ENCODE measurements at regions of chr3 and their contacts with region 1.

Region 1: GRCh38 chr3:66822186-66823008 is 175.7 kb upstream of the KBTBD8 start:
- DNase-seq: peak; percentile 81
- H3K4me3 Mint-ChIP-seq: no peak overlapping the region
- H3K27ac Mint-ChIP-seq: no peak overlapping the region
- H3K4me1 Mint-ChIP-seq: no peaks in the 10 kb centered on the region
- H3K27me3 Mint-ChIP-seq: peaks cover 14% of the 10 kb centered on the region
- CTCF ChIP-seq: peak; percentile 58

Region 2: DNA sequence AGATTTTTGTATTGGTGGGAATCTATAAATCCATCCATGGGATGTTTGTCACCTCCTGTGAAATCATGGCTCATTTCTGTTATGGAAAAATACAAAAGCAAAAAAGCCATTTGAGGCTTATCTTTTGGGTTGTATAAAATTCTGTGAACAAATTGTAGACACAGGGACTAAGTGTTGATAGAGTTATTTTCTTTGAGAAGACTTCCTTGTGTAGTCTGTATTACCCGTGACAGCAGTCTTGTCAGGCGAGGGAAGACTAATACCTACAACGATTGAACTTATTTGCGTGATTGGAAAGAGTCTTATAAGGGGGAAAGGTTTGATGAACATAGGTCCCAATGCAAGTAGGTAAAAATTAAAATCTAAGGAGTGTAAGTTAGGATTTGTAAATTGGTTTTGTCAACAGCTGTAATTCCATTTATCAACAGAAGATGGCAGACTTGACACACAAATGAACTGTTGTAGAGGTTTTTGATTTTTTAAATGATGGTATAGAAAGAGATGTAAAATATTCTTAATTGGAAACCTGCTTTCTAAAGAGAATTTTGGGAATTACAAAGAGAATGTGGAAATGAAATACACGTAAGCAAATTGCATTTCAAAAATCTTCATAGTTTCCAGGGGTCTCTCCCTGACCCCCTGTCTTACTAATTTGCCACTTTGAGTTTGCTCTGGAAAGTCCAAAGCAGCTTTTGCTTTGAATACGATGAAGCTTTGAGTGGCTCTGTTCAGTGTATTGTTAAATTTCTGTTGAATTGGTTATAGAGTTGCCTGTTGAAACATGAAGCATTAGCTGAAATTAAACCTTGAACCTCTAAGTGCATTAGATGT is 568.4 kb before region 1 on chr3:
- CTCF ChIA-PET with region 1: interaction called, 7 read pairs
- intact Hi-C with region 1: loop called (anchors 1 kb)
- DNase-seq: no peak
- H3K4me3 Mint-ChIP-seq: no peak overlapping the region
- H3K27ac Mint-ChIP-seq: no peak overlapping the region
- H3K4me1 Mint-ChIP-seq: no peaks in the 10 kb centered on the region
- H3K27me3 Mint-ChIP-seq: no peaks in the 10 kb centered on the region
- CTCF ChIP-seq: peak; percentile 50

Region 3: GRCh38 chr3:66442254-66443117 is 379.9 kb before region 1 on chr3:
- CTCF ChIA-PET with region 1: no interaction called
- intact Hi-C with region 1: no loop called
- DNase-seq: peak; percentile 2
- H3K4me3 Mint-ChIP-seq: no peak overlapping the region
- H3K27ac Mint-ChIP-seq: no peak overlapping the region
- H3K4me1 Mint-ChIP-seq: peaks cover 11% of the 10 kb centered on the region
- H3K27me3 Mint-ChIP-seq: no peaks in the 10 kb centered on the region
- CTCF ChIP-seq: no peak

Region 4: GRCh38 chr3:66778777-66779176 is 43.6 kb before region 1 on chr3:
- CTCF ChIA-PET with region 1: no interaction called
- intact Hi-C with region 1: no loop called
- DNase-seq: no peak
- H3K4me3 Mint-ChIP-seq: no peak overlapping the region
- H3K27ac Mint-ChIP-seq: no peak overlapping the region
- H3K4me1 Mint-ChIP-seq: no peaks in the 10 kb centered on the region
- H3K27me3 Mint-ChIP-seq: peaks cover 39% of the 10 kb centered on the region
- CTCF ChIP-seq: no peak

Region 5: GRCh38 chr3:66836363-66837152 is 14.2 kb after region 1 on chr3:
- CTCF ChIA-PET with region 1: no interaction called
- intact Hi-C with region 1: no loop called
- DNase-seq: no peak
- H3K4me3 Mint-ChIP-seq: no peak overlapping the region
- H3K27ac Mint-ChIP-seq: no peak overlapping the region
- H3K4me1 Mint-ChIP-seq: no peaks in the 10 kb centered on the region
- H3K27me3 Mint-ChIP-seq: no peaks in the 10 kb centered on the region
- CTCF ChIP-seq: no peak

Measured in Calu3 (cell line).